ENCODE measurements at regions of chr7 and their contacts with region 1.

Region 1: DNA sequence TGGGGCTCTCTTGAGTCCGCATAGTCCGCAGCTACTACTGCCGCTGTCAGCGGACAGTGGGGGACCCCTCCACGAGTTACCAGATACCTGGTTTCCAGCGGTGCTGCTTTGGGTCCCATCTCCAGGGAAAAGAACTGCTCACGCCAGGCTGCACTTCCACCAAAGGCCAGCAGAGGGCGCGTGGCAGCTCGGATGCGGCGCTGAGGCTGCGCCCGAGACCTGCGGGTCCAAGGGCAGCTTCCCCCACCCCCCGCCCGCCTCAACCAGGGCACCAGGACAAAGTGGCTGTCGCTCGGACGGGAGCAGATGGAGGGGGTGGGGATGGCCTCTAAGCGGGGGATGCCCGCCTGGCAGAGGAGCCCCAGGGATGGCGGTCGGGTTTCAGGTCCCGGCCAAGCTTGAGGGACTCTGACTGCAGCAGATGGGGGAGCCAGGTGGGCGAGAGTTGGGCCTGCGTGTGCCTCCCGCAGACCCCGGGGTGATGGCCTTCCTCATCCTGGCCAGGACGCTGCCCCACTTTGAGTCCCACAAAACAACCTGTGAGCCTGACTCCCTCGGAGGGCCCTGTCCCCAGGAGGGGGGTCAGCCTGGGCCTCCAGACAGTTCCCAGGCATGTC is 23.8 kb upstream of the ZNF735 start:
- DNase-seq: peak in 5 of 7 donors; percentile 22 to 58 (median 34)
- H3K4me3 ChIP-seq: no peak overlapping the region
- H3K27ac ChIP-seq: no peak overlapping the region
- H3K4me1 ChIP-seq: no peaks in the 10 kb centered on the region
- H3K27me3 ChIP-seq: peaks cover 18% of the 10 kb centered on the region
- CTCF ChIP-seq: peak; percentile 52 to 78 (median 71)
- POLR2A ChIP-seq: no peak

Region 2: GRCh38 chr7:64618785-64619456 is 435.7 kb after region 1 on chr7:
- intact Hi-C with region 1: loop called (anchors 5 kb)
- DNase-seq: peak in 3 of 7 donors; percentile 33 to 43 (median 43)
- H3K4me3 ChIP-seq: no peak overlapping the region
- H3K27ac ChIP-seq: no peak overlapping the region
- H3K4me1 ChIP-seq: no peaks in the 10 kb centered on the region
- H3K27me3 ChIP-seq: no peaks in the 10 kb centered on the region
- CTCF ChIP-seq: peak; percentile 55 to 81 (median 76)
- POLR2A ChIP-seq: no peak